ENCODE measurements at regions of chr13 and their contacts with region 1.

Region 1: DNA sequence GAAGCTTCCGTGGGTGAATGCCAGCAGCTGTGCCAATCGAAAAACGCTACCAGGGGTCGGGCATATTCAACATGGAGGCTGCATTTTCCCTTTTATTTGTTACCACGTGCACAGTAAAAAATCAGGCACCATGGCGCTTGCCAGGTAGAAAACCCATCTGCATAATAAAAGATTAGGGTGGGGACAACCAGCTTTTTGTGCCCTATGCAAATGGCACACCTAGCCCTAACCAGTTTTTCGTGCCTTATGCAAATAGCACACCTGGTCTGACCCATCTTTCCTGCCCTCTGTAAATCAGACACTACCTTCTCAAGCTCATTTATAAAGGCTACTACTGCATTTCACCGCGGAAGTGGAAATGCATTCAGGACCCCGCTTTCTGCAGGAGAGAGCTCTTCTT is 62.1 kb upstream of the FREM2 start:
- DNase-seq: no peak
- H3K4me3 ChIP-seq: no peak overlapping the region
- H3K27ac ChIP-seq: no peak overlapping the region
- H3K4me1 ChIP-seq: no peaks in the 10 kb centered on the region
- H3K27me3 ChIP-seq: no peaks in the 10 kb centered on the region
- CTCF ChIP-seq: no peak
- POLR2A ChIP-seq: no peak

Region 2: DNA sequence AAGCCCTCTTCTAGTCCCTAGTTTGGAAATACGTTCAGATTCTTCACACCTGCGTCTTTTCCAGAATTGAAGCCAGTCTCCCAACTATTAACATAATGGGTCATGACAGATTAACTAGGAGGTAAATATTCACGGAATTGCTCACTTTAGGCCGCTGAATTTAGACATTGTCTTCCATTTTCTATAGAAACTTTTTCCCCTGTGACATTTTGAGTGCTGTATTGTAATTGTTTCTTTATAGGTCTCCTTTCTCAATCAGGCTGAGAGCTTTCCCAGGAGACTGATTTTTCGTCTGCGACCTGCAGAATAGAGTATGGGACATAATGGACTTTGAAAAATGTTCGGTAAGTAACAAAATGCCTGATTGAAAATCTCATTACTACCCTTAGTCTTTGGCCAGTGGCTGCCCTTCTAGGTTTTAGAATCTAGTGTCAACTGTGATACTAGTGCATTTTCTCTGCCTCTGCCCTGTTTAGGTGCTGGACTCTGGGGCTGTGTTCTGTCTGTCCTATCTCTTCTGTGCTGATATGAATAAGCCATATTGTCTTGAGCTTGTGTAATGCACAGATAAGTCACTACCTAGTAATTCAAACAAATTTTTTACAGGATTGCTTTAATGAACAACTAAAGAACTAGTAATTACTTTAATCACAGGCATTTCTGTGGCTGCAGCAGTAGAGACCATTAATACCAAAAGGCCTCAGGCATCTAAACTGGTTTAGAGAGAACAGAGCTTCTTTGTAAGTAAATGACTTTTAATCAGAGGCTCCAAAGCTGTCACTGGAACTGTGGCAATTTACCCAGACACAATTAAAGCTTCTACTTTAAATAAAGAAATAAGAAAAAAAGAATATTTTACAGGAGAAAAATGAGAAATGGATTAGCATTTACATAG is 60.3 kb before region 1 on chr13:
- intact Hi-C with region 1: loop called (anchors 2 kb)
- DNase-seq: no peak
- H3K4me3 ChIP-seq: no peak overlapping the region
- H3K27ac ChIP-seq: no peak overlapping the region
- H3K4me1 ChIP-seq: no peaks in the 10 kb centered on the region
- H3K27me3 ChIP-seq: peaks cover 0 to 7% of the 10 kb centered on the region in 2 donors
- CTCF ChIP-seq: no peak
- POLR2A ChIP-seq: no peak

Region 3: DNA sequence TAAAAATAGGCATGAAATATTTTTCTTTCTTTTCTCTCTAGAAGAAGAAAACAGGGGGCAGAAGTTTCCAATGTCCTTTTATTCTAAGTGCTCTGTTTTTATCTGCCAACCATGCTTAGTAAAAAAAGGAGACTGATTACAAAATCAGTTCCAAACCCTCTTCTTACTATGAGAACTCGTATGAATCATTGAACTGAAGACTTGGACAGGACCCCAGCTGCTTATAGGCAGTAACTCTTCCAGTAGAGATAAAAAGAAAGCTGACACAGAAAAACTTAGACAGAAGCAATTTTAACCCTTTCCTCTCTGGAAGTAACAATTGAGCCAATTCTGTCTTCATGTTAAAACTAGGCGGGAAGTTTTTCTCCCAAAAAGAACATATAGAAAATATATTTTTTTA is 37.5 kb after region 1 on chr13:
- intact Hi-C with region 1: no loop called
- DNase-seq: no peak
- H3K4me3 ChIP-seq: no peak overlapping the region
- H3K27ac ChIP-seq: no peak overlapping the region
- H3K4me1 ChIP-seq: no peaks in the 10 kb centered on the region
- H3K27me3 ChIP-seq: no peaks in the 10 kb centered on the region
- CTCF ChIP-seq: no peak
- POLR2A ChIP-seq: no peak

Region 4: DNA sequence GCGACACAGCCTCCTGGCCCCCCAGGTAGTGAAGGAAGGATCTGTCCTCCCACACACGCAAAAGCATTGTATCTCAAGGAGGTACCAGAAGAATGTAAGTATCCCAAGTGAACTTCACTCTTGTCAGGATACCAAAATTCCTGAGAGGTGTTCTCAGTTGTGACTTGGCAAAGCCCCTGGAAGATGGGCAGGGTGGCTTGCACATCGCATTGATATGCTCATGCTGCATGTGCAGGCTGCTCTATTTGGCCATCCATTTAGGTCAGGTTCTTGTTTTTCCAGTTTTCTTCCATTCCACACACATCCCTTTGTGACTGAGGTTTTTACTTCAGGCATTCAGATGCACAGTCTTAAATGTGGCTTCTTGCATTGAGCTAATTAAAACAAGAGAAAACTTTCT is 1658.8 kb after region 1 on chr13:
- intact Hi-C with region 1: loop called (anchors 10 kb)
- DNase-seq: peak in 1 of 2 donors; percentile 86
- H3K4me3 ChIP-seq: no peak overlapping the region
- H3K27ac ChIP-seq: peak overlapping the region; percentile 61 to 65
- H3K4me1 ChIP-seq: no peaks in the 10 kb centered on the region
- H3K27me3 ChIP-seq: no peaks in the 10 kb centered on the region
- CTCF ChIP-seq: no peak
- POLR2A ChIP-seq: no peak